Right lobe of liver (tissue), 6 donors: ENCODE measurements at regions of chr15 and their contacts with region 1.

Region 1: DNA sequence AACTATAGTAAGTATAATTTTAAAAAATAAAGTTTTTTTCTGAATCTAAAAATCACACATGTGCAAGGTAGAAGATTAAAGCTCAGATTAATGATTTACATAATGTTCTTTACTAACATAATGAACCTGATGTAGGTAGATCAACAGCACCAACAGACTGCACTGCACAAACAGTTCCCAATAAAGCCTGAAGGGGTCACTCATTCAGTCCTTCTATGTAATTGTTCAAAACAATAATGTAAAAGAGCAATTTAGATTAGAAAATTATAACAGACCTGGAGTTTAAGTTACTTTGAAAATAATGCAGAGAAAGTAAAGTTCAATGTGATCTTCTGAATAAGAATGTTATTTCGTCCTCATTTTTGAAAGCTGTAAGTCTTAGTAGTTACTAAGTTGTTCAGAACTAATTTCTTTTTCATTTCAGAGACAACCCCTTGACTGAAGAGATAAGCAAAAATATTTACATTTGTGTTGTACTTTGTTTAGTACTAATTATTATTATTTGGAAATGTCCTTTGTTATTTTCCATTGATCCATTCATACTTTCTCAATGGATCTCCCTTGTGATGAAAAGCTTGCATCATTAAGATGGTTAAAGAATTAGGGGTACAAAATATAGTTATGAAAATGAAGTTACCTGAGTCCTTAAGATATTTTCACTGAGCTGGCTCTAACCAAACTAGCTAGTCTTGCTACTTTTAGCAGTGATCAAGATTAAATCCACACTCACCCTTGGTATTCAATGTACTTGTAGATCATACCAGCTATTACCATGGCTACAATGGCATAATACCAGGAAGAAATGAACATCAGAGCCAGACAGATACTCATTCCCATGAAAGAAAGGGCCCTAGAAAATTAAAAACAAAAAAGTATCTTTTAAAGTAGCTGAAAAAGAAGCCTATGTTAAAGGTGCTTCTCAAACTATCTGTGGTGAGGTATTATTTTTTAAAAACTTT is 16.8 kb downstream of the EMC4 start:
- DNase-seq: no peak
- ATAC-seq: peak; percentile 78 to 86 (median 78)
- H3K4me3 ChIP-seq: no peak overlapping the region
- H3K27ac ChIP-seq: no peak overlapping the region
- H3K4me1 ChIP-seq: no peaks in the 10 kb centered on the region
- H3K27me3 ChIP-seq: no peaks in the 10 kb centered on the region
- CTCF ChIP-seq: peak; percentile 71 to 83 (median 76)
- POLR2A ChIP-seq: no peak

Region 2: GRCh38 chr15:34065941-34066340 is 175.7 kb before region 1 on chr15:
- intact Hi-C with region 1: no loop called
- DNase-seq: no peak
- ATAC-seq: no peak
- H3K4me3 ChIP-seq: no peak overlapping the region
- H3K27ac ChIP-seq: no peak overlapping the region
- H3K4me1 ChIP-seq: no peaks in the 10 kb centered on the region
- H3K27me3 ChIP-seq: no peaks in the 10 kb centered on the region
- CTCF ChIP-seq: no peak
- POLR2A ChIP-seq: no peak

Region 3: GRCh38 chr15:34367101-34368081 is 125.7 kb after region 1 on chr15 and contains the start of gene LPCAT4:
- intact Hi-C with region 1: loop called in 1 of 2 experiments (anchors 10 kb)
- DNase-seq: peak; percentile 88 to 92 (median 92)
- ATAC-seq: peak; percentile 91 to 96 (median 93)
- H3K4me3 ChIP-seq: peak within 1 kb of the TSS; percentile 78 to 95 (median 79)
- H3K27ac ChIP-seq: peak within 1 kb of the TSS; percentile 76 to 93 (median 92)
- H3K4me1 ChIP-seq: peaks cover 0 to 6% (median 0%) of the 10 kb centered on the region in 4 donors
- H3K27me3 ChIP-seq: no peaks in the 10 kb centered on the region
- CTCF ChIP-seq: peak; percentile 89 to 98 (median 94)
- POLR2A ChIP-seq: peak; percentile 70
- total RNA-seq, gene LPCAT4: 3.2 to 6.7 (median 4.5) TPM